Activated T-helper 1 cell treated with anti-CD3 and anti-CD28 coated beads, Interleukin-12 subunit alpha, Interleukin-12 subunit beta, Interleukin-2, Interleukin-4 antibody, amounts not matched to agents 30 ng/mL and 10 ng/mL and 1 ng/mL, durations not matched to agents 14 hours and 24 hours and 36 hours (primary cell): ENCODE measurements at regions of chr3 and their contacts with region 1.

Region 1: GRCh38 chr3:32238453-32239306 is at the start of gene CMTM8:
- DNase-seq: peak; percentile 54
- H3K4me3 Mint-ChIP-seq: peak within 1 kb of the TSS; percentile 86
- H3K27ac Mint-ChIP-seq: peak within 1 kb of the TSS; percentile 53
- H3K4me1 Mint-ChIP-seq: peaks cover 25% of the 10 kb centered on the region
- H3K27me3 Mint-ChIP-seq: peaks cover 31% of the 10 kb centered on the region
- total RNA-seq, gene CMTM8: 5.0 and 5.7 TPM in 2 replicates

Region 2: GRCh38 chr3:32106280-32106928 is 132.3 kb before region 1 on chr3 and contains the start of gene GPD1L:
- intact Hi-C with region 1: loop called (anchors 2 kb)
- DNase-seq: peak; percentile 93
- H3K4me3 Mint-ChIP-seq: peak within 1 kb of the TSS; percentile 97
- H3K27ac Mint-ChIP-seq: peak within 1 kb of the TSS; percentile 89
- H3K4me1 Mint-ChIP-seq: peaks cover 28% of the 10 kb centered on the region
- H3K27me3 Mint-ChIP-seq: no peaks in the 10 kb centered on the region
- total RNA-seq, gene GPD1L: 16.3 and 16.6 TPM in 2 replicates

Region 3: DNA sequence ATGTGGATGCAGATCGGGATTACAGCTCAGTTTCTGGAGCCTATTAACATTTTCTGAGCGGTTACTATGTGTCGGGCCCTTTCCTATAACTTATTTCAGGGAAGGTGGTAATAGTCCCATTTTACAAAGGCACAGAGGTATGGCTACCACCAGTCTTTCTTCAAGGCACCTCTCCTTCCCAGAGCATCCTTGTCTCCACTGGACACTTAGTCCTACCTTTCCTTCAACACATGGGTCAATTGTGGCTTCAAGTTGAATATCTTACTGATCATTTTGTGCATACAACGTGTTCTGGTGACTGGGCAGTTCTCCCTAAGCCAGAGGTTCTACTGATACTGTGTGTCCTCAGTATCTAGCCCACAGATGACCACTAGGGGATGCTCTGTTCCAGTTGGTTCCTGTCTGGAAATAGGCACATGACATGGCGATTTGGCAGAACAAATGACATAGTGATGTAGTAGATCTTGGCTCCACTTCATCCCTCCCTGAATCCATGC is 60.9 kb before region 1 on chr3:
- intact Hi-C with region 1: loop called (anchors 2 kb)
- DNase-seq: peak; percentile 37
- H3K4me3 Mint-ChIP-seq: no peak overlapping the region
- H3K27ac Mint-ChIP-seq: no peak overlapping the region
- H3K4me1 Mint-ChIP-seq: peaks cover 12% of the 10 kb centered on the region
- H3K27me3 Mint-ChIP-seq: peaks cover 5% of the 10 kb centered on the region

Region 4: GRCh38 chr3:32570421-32571191 is 331.9 kb after region 1 on chr3 and contains the start of gene DYNC1LI1:
- intact Hi-C with region 1: loop called (anchors 5 kb)
- DNase-seq: peak; percentile 90
- H3K4me3 Mint-ChIP-seq: peak within 1 kb of the TSS; percentile 91
- H3K27ac Mint-ChIP-seq: peak within 1 kb of the TSS; percentile 88
- H3K4me1 Mint-ChIP-seq: peaks cover 22% of the 10 kb centered on the region
- H3K27me3 Mint-ChIP-seq: no peaks in the 10 kb centered on the region
- total RNA-seq, gene DYNC1LI1: 35.9 and 43.3 TPM in 2 replicates